CD8-positive, alpha-beta memory T cell (primary cell): ENCODE measurements at regions of chr3 and their contacts with region 1.

Region 1: DNA sequence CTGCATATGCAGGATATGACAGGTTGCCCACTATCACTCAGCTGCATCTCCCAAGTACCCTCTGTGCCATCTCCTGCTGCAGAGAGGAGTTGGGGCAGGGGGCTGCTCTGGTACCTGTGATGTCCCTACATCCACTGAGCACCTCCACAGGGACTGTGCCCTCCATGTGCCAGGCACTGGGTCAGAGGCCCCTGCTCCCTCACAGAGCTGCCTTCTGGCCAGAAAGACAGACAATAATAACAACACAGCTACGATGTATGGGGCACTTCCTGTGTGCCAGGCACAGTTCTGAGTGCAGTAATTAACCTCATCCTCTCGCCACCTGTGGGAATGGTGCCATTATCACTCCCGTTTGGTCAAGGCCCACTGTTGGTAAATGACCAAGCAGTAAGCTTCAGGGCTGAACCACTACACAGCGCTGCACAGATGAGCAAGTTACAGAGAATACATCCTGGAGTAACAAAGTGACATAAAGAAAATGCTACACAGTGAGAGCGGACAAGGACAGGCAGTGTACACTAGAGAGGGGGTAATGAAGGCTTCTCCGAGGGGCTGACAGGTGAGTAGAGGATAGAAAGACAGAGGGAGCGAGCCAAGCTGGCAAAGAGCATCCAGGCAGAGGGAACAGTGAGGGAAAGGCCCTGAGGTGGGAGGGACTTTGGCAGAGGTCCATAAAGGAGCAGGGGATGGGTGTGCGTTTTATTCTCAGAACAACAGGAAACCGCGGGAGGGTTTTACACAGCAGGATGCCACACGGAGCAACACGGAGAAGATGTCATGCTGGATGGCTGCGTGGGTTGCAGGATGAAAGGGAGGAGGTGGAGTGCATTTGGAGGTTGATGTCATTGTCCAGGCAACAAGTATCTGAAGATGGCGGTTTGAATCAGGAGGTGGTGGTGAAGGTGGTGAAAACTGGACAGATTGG is 13.6 kb downstream of the WNT7A start:
- DNase-seq: peak in 3 of 5 donors; percentile 10 to 81 (median 55)
- H3K4me3 ChIP-seq: peak overlapping the region; percentile 54
- H3K4me3 Mint-ChIP-seq: peak overlapping the region; percentile 16 to 81 (median 67)
- H3K27ac ChIP-seq: peak overlapping the region; percentile 45
- H3K27ac Mint-ChIP-seq: peak overlapping the region; percentile 83 to 99 (median 96)
- H3K4me1 ChIP-seq: peaks cover 55% of the 10 kb centered on the region
- H3K4me1 Mint-ChIP-seq: peaks cover 39 to 48% (median 46%) of the 10 kb centered on the region in 3 donors
- H3K27me3 ChIP-seq: no peaks in the 10 kb centered on the region
- H3K27me3 Mint-ChIP-seq: peaks cover 4 to 10% of the 10 kb centered on the region in 2 donors

Region 2: DNA sequence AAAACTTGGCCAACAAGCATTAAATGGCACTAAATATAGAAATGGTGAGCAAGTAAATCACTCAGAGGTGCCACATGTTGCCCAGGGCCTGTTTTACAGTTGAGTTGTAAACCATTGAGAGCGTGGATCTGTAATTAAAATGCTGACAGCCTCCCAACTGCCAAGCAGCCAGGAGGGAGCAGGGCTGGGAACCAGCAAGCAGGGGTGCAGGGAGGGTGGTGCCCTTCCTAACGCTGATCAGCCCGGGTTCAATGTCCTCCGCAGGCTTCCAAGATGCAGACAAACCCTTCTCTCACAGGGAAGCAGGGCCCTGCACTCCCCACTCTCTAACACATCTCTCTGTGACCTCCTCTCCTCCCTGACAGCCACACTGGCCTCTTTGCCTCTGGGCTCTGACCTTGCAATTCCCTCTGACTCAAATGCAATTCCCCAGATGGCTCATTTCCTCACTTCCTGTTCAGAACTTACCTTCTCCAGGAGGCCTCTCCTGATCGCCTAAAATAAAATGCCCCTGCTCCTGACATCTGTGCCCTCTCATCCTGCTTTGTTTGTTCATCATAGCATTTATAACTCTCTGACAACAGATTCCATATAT is 26.5 kb before region 1 on chr3:
- CTCF ChIA-PET with region 1: no interaction called
- POLR2A ChIA-PET with region 1: no interaction called
- DNase-seq: no peak
- H3K4me3 ChIP-seq: no peak overlapping the region
- H3K4me3 Mint-ChIP-seq: no peak overlapping the region
- H3K27ac ChIP-seq: no peak overlapping the region
- H3K27ac Mint-ChIP-seq: peak overlapping the region in 1 of 8 donors; percentile 27
- H3K4me1 ChIP-seq: no peaks in the 10 kb centered on the region
- H3K4me1 Mint-ChIP-seq: no peaks in the 10 kb centered on the region
- H3K27me3 ChIP-seq: peaks cover 4% of the 10 kb centered on the region
- H3K27me3 Mint-ChIP-seq: peaks cover 2 to 7% of the 10 kb centered on the region in 2 donors

Region 3: DNA sequence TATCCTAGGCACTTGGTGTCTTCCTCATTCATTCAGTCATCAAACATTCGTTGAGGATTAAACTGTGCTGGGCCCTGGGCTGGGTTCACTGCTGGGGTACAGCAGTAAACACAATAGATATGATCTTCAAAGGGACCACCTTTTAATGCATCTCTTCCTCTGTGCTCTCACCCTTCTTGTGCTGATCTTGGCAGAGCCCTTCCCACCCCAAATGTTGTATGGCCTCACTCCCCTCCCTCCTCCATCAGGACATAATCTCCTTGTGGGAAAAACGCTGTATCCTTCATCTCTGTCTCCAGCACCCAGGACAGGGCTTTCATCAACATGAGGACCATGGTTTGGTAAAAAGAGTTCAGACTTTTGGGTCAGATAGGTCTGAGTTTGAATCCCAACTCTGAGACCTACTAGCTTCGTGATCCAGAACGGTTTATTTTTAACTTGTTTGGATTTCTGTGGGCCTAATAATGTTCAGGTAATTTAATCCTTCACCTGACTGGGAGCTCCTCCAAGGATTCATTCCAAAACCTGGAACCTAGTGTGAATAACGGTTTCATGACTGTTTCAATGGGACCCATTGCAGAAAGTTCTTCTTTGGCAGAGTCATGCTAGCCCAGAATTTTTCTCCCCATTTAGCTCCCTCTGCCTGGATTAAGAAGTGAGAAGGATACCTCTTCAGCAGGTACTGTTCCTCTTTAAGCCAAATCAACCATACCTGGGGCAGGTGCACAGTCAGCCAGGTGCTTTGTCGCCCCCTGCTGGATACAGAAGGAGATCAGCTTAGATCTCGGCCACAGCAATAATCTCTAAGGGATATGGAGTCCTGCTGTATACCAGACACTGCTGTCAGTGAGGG is 18.8 kb after region 1 on chr3:
- CTCF ChIA-PET with region 1: interaction called, 12 read pairs
- POLR2A ChIA-PET with region 1: interaction called, 7 read pairs
- DNase-seq: peak; percentile 51 to 77 (median 59)
- H3K4me3 ChIP-seq: no peak overlapping the region
- H3K4me3 Mint-ChIP-seq: peak overlapping the region in 1 of 7 donors; percentile 20
- H3K27ac ChIP-seq: no peak overlapping the region
- H3K27ac Mint-ChIP-seq: no peak overlapping the region
- H3K4me1 ChIP-seq: peaks cover 13% of the 10 kb centered on the region
- H3K4me1 Mint-ChIP-seq: peaks cover 6 to 11% (median 7%) of the 10 kb centered on the region in 3 donors
- H3K27me3 ChIP-seq: peaks cover 20% of the 10 kb centered on the region
- H3K27me3 Mint-ChIP-seq: peaks cover 22 to 39% of the 10 kb centered on the region in 2 donors